Activated B cell treated with CpG ODN at 0.5 μM for 24 hours (primary cell): ENCODE measurements at regions of chr7 and their contacts with region 1.

Region 1: GRCh38 chr7:25862260-25863037 is 289.5 kb upstream of the NFE2L3 start:
- DNase-seq: peak; percentile 49
- ATAC-seq: peak; percentile 89
- H3K4me3 Mint-ChIP-seq: peak overlapping the region; percentile 35
- H3K27ac Mint-ChIP-seq: peak overlapping the region; percentile 59
- H3K4me1 Mint-ChIP-seq: peaks cover 14% of the 10 kb centered on the region
- H3K27me3 Mint-ChIP-seq: peaks cover 63% of the 10 kb centered on the region
- CTCF ChIP-seq: no peak

Region 2: DNA sequence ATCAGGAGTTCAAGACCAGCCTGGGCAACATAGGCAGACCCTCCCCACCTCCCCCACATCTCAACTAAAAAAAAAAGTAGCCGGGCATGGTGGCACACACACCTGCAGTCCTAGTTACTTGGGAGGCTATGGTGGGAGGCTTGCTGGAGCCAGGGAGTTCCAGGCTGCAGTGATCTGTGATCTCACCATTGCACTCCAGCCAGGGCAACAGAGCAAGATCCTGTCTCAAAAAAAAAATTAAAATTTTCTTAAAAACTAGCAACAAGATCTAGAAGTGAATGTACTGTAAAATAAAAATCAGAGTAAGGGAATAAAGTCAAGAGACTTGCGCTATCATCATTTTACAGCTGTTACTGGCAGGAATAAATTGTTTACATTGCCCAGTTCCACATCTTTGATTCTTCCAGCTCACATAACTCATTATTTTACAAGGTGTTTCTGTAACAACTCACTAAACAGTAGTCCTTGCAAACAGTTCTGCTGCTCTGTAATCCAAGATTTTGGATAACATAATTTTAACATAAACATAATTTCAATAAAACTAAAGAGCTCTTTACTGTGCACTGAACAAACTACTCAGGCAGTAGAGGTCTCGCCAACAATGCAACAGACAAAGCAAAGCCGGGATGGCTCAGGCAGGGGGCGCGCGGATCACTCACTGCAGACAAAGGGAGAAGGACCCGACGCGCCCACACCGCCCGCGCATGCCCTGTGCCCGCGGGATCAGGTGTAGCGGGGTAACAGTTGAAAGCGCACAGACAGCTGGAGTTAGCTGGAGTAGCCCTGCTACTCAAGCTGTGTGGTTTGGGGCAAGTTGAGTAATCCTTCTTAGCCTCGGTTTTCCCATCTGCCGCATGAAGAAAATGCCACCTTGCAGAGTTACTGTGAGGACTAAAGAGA is 216.2 kb after region 1 on chr7:
- CTCF ChIA-PET with region 1: no interaction called
- POLR2A ChIA-PET with region 1: no interaction called
- intact Hi-C with region 1: no loop called
- DNase-seq: peak; percentile 73
- ATAC-seq: peak; percentile 100
- H3K4me3 Mint-ChIP-seq: no peak overlapping the region
- H3K27ac Mint-ChIP-seq: no peak overlapping the region
- H3K4me1 Mint-ChIP-seq: peaks cover 7% of the 10 kb centered on the region
- H3K27me3 Mint-ChIP-seq: peaks cover 33% of the 10 kb centered on the region
- CTCF ChIP-seq: no peak

Region 3: GRCh38 chr7:26853788-26854393 is 991.4 kb after region 1 on chr7:
- CTCF ChIA-PET with region 1: no interaction called
- POLR2A ChIA-PET with region 1: no interaction called
- intact Hi-C with region 1: loop called (anchors 10 kb)
- DNase-seq: no peak
- ATAC-seq: no peak
- H3K4me3 Mint-ChIP-seq: no peak overlapping the region
- H3K27ac Mint-ChIP-seq: no peak overlapping the region
- H3K4me1 Mint-ChIP-seq: peaks cover 30% of the 10 kb centered on the region
- H3K27me3 Mint-ChIP-seq: no peaks in the 10 kb centered on the region
- CTCF ChIP-seq: no peak

Region 4: GRCh38 chr7:27235387-27236311 is 1373.2 kb after region 1 on chr7:
- CTCF ChIA-PET with region 1: no interaction called
- POLR2A ChIA-PET with region 1: no interaction called
- intact Hi-C with region 1: loop called (anchors 2 kb)
- DNase-seq: no peak
- ATAC-seq: no peak
- H3K4me3 Mint-ChIP-seq: no peak overlapping the region
- H3K27ac Mint-ChIP-seq: no peak overlapping the region
- H3K4me1 Mint-ChIP-seq: peaks cover 15% of the 10 kb centered on the region
- H3K27me3 Mint-ChIP-seq: peaks cover 60% of the 10 kb centered on the region
- CTCF ChIP-seq: no peak

Region 5: GRCh38 chr7:27245798-27246691 is 1383.6 kb after region 1 on chr7:
- CTCF ChIA-PET with region 1: no interaction called
- POLR2A ChIA-PET with region 1: no interaction called
- intact Hi-C with region 1: loop called (anchors 2 kb)
- DNase-seq: no peak
- ATAC-seq: no peak
- H3K4me3 Mint-ChIP-seq: no peak overlapping the region
- H3K27ac Mint-ChIP-seq: no peak overlapping the region
- H3K4me1 Mint-ChIP-seq: peaks cover 36% of the 10 kb centered on the region
- H3K27me3 Mint-ChIP-seq: peaks cover 76% of the 10 kb centered on the region
- CTCF ChIP-seq: no peak